ENCODE measurements at regions of chr14 and their contacts with region 1.

Region 1: DNA sequence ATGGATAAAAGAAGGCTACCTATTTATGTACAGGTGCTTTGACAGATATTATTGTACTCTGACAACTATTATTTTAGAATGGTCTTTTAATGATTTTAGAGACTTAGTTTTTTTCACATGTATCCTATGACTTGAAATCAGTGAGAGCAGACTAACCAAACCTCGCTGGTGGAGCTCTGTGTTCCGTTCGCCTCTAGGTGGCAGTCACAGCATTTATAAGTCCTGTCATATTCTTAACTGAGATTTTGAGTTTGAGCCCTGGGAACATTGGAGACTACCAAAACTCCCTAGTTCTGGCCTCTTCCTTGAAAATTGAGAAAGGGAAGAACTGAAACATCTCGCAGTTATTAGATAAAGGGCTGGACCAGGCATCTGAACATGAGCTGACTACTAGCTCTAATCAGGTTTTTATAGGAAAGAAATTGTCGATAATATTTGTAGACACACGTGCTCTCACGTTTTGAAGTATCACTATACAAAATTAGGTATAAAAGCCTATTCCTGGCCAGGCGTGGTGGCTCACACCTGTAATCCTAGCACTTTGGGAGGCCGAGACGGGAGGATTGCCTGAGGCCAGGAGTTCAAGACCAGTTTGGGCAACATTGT is 48.3 kb downstream of the TTLL5 start:
- DNase-seq: peak in 8 of 9 donors; percentile 33 to 65 (median 56)
- ATAC-seq: peak; percentile 83
- H3K4me3 ChIP-seq: no peak overlapping the region
- H3K4me3 Mint-ChIP-seq: no peak overlapping the region
- H3K27ac ChIP-seq: no peak overlapping the region
- H3K27ac Mint-ChIP-seq: no peak overlapping the region
- H3K4me1 ChIP-seq: no peaks in the 10 kb centered on the region
- H3K4me1 Mint-ChIP-seq: no peaks in the 10 kb centered on the region
- H3K27me3 ChIP-seq: no peaks in the 10 kb centered on the region
- H3K27me3 Mint-ChIP-seq: no peaks in the 10 kb centered on the region

Region 2: DNA sequence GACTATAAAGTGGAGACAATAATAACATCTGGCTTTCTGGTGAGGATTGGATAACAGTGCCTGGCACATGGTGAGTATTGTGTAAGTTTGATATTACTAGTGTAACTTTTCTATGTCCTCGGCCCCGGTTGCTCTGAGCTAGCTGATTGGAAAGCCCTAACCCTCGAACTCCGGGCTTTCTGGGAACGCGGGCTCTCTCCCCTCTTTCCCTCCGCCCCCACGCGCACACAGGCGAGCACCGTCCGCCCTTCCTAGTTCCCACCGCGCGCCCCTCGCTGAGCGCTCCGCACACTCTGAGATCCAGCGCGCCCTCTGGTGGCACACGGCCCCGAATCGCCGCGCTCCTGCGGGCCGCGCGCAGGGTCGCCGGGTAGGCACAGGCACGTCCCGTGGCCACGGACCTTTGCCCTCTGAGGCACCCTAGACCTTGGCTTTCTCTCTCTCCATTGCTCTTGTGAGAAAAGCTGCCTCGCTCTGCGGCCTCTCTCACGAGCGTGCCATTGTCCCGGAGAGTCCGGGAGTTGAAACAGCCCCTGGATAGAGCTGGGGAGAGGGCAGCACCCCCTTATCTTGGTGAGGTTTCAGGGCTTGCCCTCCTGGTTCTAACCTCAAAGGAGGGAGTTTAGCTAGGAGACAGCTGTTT is 643.5 kb after region 1 on chr14:
- CTCF ChIA-PET with region 1: interaction called, 5 read pairs
- POLR2A ChIA-PET with region 1: no interaction called
- intact Hi-C with region 1: loop called in 1 of 2 experiments (anchors 1 kb)
- DNase-seq: peak in 7 of 9 donors; percentile 24 to 70 (median 37)
- ATAC-seq: peak; percentile 58
- H3K4me3 ChIP-seq: no peak overlapping the region
- H3K4me3 Mint-ChIP-seq: peak overlapping the region in 5 of 10 donors; percentile 21 to 69 (median 43)
- H3K27ac ChIP-seq: no peak overlapping the region
- H3K27ac Mint-ChIP-seq: no peak overlapping the region
- H3K4me1 ChIP-seq: no peaks in the 10 kb centered on the region
- H3K4me1 Mint-ChIP-seq: peaks cover 0 to 8% (median 3%) of the 10 kb centered on the region in 7 donors
- H3K27me3 ChIP-seq: no peaks in the 10 kb centered on the region
- H3K27me3 Mint-ChIP-seq: peaks cover 13 to 54% (median 35%) of the 10 kb centered on the region in 5 donors

Region 3: DNA sequence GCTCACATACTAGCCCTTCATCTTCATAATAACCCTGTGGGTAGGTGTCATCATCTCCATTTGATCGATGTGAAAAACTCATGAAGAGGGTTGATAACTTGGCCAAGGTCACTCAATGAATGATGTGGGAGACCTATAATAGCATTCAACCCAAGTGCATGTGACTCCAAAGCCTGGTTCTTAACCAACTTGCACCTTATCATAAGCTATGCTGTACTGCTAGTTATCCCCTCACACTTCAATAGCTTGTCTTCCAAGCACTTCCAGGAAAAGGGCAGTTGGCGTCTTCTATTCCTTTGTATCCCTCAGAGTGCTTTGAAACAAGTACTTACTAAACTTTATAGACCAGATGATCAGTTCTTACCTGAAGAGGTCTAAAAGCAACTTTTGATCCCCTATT is 1732.9 kb after region 1 on chr14:
- CTCF ChIA-PET with region 1: no interaction called
- POLR2A ChIA-PET with region 1: no interaction called
- intact Hi-C with region 1: no loop called
- DNase-seq: no peak
- ATAC-seq: no peak
- H3K4me3 ChIP-seq: no peak overlapping the region
- H3K4me3 Mint-ChIP-seq: no peak overlapping the region
- H3K27ac ChIP-seq: no peak overlapping the region
- H3K27ac Mint-ChIP-seq: no peak overlapping the region
- H3K4me1 ChIP-seq: no peaks in the 10 kb centered on the region
- H3K4me1 Mint-ChIP-seq: no peaks in the 10 kb centered on the region
- H3K27me3 ChIP-seq: no peaks in the 10 kb centered on the region
- H3K27me3 Mint-ChIP-seq: no peaks in the 10 kb centered on the region

Measured in naive thymus-derived CD4-positive, alpha-beta T cell (primary cell).